ENCODE measurements at regions of chr4 and their contacts with region 1.

Region 1: DNA sequence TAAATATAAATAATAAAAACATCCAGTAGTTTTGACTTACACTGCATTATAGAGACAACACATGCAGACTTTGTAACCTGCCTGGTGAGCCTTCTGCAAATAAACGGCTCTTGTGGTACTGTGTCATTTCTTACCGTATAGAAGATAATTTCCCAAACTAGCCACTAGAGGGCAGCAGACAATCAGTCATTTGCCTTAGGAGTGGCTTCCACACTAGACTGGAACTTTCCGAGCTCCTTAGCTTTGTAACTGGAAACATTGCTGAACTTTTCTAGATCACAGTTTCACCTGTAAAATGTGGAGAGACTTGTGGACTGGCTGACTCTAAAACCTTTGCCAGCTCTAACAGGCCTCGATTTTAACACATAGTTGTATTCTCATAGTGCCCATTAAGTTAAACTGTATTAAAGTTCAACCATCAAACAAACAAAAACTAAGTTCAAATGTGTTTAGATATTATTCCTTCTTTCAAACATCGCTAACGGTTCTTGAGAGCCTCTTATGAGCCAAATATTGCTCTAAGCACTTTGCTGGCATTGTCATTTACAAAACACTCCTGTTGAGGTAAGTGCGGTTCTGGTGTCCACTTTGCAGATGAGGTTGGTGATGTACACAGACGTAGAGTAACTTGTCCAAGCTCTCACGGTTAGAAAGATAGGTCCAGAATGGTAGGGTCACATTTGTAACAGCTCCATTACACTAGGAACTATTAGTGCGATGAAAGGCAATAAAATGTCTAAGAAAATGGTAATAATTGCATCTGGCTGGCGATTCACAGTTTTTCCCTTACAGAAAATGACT is 345.5 kb downstream of the ANK2 start:
- DNase-seq: peak in 32 of 35 experiments; percentile 1 to 86 (median 18)
- ATAC-seq: peak; percentile 75 to 89 (median 82)
- H3K4me3 ChIP-seq: no peak overlapping the region
- H3K4me3 Mint-ChIP-seq: no peak overlapping the region
- H3K27ac ChIP-seq: no peak overlapping the region
- H3K27ac Mint-ChIP-seq: no peak overlapping the region
- H3K4me1 ChIP-seq: no peaks in the 10 kb centered on the region
- H3K4me1 Mint-ChIP-seq: peaks cover 0 to 1% (median 0%) of the 10 kb centered on the region in 3 donors
- H3K27me3 ChIP-seq: peaks cover 0 to 10% of the 10 kb centered on the region in 2 experiments
- H3K27me3 Mint-ChIP-seq: peaks cover 2 to 6% of the 10 kb centered on the region in 2 donors

Region 2: GRCh38 chr4:113300471-113300928 is 94.4 kb before region 1 on chr4:
- CTCF ChIA-PET with region 1: interaction called in 1 of 2 experiments, 11 read pairs
- POLR2A ChIA-PET with region 1: no interaction called
- DNase-seq: no peak
- ATAC-seq: no peak
- H3K4me3 ChIP-seq: no peak overlapping the region
- H3K4me3 Mint-ChIP-seq: no peak overlapping the region
- H3K27ac ChIP-seq: no peak overlapping the region
- H3K27ac Mint-ChIP-seq: no peak overlapping the region
- H3K4me1 ChIP-seq: no peaks in the 10 kb centered on the region
- H3K4me1 Mint-ChIP-seq: no peaks in the 10 kb centered on the region
- H3K27me3 ChIP-seq: no peaks in the 10 kb centered on the region
- H3K27me3 Mint-ChIP-seq: peaks cover 0 to 3% of the 10 kb centered on the region in 2 donors

Region 3: DNA sequence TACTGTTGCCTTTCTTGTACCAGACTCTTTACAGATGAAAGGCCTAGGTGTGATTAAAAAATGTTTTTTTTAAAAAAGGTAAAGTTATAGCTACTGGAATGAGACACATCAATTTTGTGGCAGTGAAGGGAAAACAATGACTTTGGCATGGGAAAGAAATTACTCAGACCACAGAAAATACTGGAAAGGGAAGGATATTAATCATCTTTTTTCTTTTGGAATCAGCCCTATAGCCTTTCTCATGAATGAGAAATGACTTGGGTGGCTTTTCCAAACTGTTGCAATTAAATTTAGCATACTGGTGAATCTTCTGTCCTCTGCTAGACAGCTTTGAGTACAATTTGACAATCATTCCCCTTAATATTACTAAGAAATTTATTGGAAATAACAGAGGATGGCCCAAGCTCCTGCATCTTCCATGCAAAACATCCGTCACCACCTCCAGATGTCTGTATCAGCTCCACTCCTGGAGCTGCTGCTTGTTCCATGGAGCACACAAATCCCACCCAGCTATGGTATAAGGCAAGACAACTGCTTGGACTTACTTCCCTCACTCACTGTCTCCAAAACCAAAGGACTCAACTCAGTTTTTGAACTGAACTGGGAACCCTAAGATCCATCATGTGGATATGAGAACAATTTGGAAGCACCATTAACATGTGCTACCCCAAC is 682.1 kb after region 1 on chr4:
- CTCF ChIA-PET with region 1: interaction called in 1 of 2 experiments, 24 read pairs
- POLR2A ChIA-PET with region 1: no interaction called
- DNase-seq: no peak
- ATAC-seq: no peak
- H3K4me3 ChIP-seq: no peak overlapping the region
- H3K4me3 Mint-ChIP-seq: no peak overlapping the region
- H3K27ac ChIP-seq: no peak overlapping the region
- H3K27ac Mint-ChIP-seq: no peak overlapping the region
- H3K4me1 ChIP-seq: no peaks in the 10 kb centered on the region
- H3K4me1 Mint-ChIP-seq: peaks cover 0 to 1% (median 0%) of the 10 kb centered on the region in 3 donors
- H3K27me3 ChIP-seq: no peaks in the 10 kb centered on the region
- H3K27me3 Mint-ChIP-seq: no peaks in the 10 kb centered on the region

Region 4: DNA sequence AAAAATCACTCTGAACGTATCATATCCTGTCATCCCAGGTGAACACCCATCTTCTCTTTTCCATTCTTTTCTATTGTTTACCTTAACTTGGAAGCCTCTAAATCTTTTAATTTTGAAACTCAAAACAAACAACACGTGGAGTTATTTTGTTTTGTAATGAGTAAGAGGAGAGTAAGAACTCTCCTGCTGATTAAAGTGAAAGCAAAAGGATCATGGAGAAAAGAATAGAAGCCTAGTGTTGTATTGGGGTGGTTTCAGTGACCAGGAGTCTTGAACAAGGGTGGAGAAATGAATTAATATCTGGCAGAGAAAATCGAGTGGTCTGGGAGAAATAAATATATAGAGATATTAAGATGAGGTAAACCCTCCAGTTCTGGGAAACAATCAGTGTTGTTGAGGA is 966.3 kb after region 1 on chr4:
- CTCF ChIA-PET with region 1: interaction called in 1 of 2 experiments, 11 read pairs
- POLR2A ChIA-PET with region 1: no interaction called
- DNase-seq: no peak
- ATAC-seq: no peak
- H3K4me3 ChIP-seq: no peak overlapping the region
- H3K4me3 Mint-ChIP-seq: no peak overlapping the region
- H3K27ac ChIP-seq: no peak overlapping the region
- H3K27ac Mint-ChIP-seq: no peak overlapping the region
- H3K4me1 ChIP-seq: no peaks in the 10 kb centered on the region
- H3K4me1 Mint-ChIP-seq: peaks cover 0 to 8% (median 3%) of the 10 kb centered on the region in 3 donors
- H3K27me3 ChIP-seq: no peaks in the 10 kb centered on the region
- H3K27me3 Mint-ChIP-seq: peaks cover 0 to 17% of the 10 kb centered on the region in 2 donors

Region 5: DNA sequence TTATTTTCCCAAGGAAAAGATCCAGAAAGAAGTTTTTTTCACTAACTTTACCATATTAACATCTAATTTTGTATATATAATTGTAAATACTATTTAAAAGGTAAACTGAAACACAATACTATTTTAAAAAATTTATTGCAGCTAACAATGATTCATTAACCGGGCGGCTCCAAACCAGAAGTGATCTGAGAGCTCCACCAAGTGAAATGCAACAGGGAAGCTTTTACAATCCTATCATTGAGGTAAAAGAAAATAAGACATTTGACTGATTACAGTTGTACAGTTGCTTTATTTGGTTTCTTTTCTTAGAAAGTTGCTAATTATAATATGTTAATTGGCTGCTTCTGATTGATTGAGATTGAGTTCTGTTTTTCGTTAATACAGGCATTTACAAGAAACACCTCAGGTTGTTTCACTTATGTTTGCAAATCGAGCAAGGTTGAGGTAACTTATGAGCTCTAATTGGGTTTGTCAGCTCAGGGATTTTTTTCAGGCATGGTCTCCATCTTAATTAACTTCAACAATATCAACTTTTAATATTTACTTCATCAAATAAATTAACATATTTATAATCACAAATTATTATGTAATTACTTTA is 983.5 kb after region 1 on chr4:
- CTCF ChIA-PET with region 1: interaction called, 3 to 12 read pairs
- POLR2A ChIA-PET with region 1: no interaction called
- DNase-seq: no peak
- ATAC-seq: no peak
- H3K4me3 ChIP-seq: no peak overlapping the region
- H3K4me3 Mint-ChIP-seq: no peak overlapping the region
- H3K27ac ChIP-seq: no peak overlapping the region
- H3K27ac Mint-ChIP-seq: no peak overlapping the region
- H3K4me1 ChIP-seq: no peaks in the 10 kb centered on the region
- H3K4me1 Mint-ChIP-seq: no peaks in the 10 kb centered on the region
- H3K27me3 ChIP-seq: no peaks in the 10 kb centered on the region
- H3K27me3 Mint-ChIP-seq: peaks cover 4 to 9% of the 10 kb centered on the region in 2 donors

Region 6: DNA sequence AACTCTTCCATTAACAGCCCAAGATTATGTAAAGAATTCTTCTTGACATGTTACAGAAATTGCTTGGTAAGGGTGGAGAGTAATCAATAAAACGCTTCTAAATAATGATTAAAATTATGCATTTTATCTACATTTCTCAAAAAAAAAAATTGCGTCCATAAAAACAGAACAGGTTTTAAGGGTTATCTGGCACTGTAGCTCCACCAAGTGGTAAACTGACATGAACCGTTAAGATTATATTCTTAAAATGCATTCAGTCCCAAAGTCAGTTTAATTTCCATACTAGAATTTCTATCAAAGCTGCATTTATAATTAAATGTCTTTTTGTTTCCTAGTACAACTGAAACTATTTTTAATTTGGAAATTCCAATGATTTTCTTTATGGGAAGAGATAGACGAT is 989.7 kb after region 1 on chr4:
- CTCF ChIA-PET with region 1: interaction called, 3 to 15 read pairs
- POLR2A ChIA-PET with region 1: no interaction called
- DNase-seq: peak in 1 of 35 experiments; percentile 20
- ATAC-seq: no peak
- H3K4me3 ChIP-seq: no peak overlapping the region
- H3K4me3 Mint-ChIP-seq: no peak overlapping the region
- H3K27ac ChIP-seq: no peak overlapping the region
- H3K27ac Mint-ChIP-seq: no peak overlapping the region
- H3K4me1 ChIP-seq: no peaks in the 10 kb centered on the region
- H3K4me1 Mint-ChIP-seq: no peaks in the 10 kb centered on the region
- H3K27me3 ChIP-seq: peaks cover 0 to 5% of the 10 kb centered on the region in 2 experiments
- H3K27me3 Mint-ChIP-seq: peaks cover 6 to 12% of the 10 kb centered on the region in 2 donors

Measured in T-cell (primary cell).